ENCODE measurements at regions of chr3 and their contacts with region 1.

Region 1: DNA sequence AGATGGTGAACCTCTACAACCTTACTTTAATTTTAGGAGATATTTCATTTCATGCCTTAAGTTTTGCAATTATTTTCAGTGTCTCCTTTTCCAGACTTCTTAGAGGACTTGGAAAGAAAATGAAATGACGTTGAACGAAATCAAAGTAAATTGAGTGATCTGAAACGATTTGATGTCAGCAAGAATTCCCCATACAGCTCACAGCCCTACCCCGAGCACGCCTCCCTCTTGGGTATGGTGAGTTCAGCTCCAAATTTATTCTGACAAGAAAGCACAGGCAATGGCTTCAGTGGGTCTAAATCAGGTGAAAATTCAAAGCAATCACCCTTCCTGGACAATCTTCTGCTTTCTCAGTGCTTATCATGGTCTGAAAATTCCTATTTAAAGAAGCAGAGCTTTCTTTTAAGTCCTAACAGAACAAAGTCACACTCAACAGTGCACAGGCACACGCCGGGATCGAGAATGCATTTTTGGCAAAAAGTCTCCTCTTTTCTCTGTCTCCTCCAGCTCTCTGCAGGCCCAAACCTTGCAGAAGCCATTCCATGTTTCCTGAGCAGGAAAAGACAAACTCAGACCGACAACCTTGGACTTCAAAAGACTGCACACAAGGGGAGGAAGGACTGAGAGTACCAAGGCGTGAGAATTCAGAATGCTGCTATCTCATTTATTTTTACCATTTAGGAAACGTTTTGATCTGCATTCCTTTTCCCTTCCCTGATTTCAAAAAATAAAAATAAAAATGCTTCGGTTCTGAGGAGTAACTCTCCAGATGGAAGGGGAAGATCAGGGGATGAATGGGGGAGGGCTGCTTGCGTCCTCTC is 72.0 kb downstream of the CCNL1 start:
- DNase-seq: peak; percentile 16
- H3K4me3 ChIP-seq: peak overlapping the region in 3 of 4 donors; percentile 50 to 73 (median 60)
- H3K27ac ChIP-seq: peak overlapping the region; percentile 96 to 100 (median 100)
- H3K4me1 ChIP-seq: peaks cover 30 to 42% (median 35%) of the 10 kb centered on the region in 4 donors
- H3K27me3 ChIP-seq: no peaks in the 10 kb centered on the region
- CTCF ChIP-seq: no peak
- EP300 ChIP-seq: no peak
- POLR2A ChIP-seq: no peak

Region 2: DNA sequence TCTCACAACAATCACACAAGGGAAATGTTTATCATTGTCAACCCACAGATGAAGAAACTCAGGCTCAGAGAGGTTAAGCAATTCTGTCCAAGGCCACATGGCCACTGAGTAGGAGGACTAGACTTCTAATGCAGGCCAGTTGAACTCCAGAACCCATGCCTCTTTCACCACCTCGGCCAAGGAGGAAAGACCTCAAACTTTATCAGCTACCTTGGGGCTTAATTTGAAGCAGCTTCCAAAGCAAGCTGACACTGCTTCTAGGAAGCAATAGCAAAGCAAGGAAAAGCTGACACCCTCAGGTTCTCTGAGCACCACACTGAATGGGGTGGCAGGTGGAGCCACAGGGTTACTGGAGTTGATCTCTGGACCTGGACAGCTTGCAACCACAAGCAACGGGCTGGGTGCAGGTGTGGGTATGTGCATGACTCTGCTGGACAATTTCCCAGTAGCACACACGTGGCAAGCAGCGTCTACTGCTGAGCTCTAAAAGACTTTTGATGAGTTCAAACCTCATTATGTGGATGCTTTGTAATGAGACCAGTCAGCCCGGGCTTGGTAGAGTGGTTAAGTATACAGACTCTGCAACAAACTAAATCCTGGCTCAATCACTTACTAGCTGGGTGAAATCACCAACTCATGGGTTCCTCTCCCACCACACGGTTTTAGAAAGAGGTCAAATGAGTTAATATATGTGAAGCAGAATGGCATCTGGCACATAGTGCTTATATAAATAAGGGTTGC is 48.8 kb after region 1 on chr3:
- in situ Hi-C with region 1: loop called in 2 of 4 experiments (anchors 10 kb)
- intact Hi-C with region 1: loop called (anchors 2 kb)
- DNase-seq: peak; percentile 83
- H3K4me3 ChIP-seq: no peak overlapping the region
- H3K27ac ChIP-seq: peak overlapping the region; percentile 74 to 84 (median 80)
- H3K4me1 ChIP-seq: peaks cover 23 to 46% (median 31%) of the 10 kb centered on the region in 4 donors
- H3K27me3 ChIP-seq: no peaks in the 10 kb centered on the region
- CTCF ChIP-seq: no peak
- EP300 ChIP-seq: no peak
- POLR2A ChIP-seq: no peak

Region 3: GRCh38 chr3:158845765-158846350 is 1757.9 kb after region 1 on chr3:
- in situ Hi-C with region 1: no loop called
- intact Hi-C with region 1: no loop called
- DNase-seq: no peak
- H3K4me3 ChIP-seq: no peak overlapping the region
- H3K27ac ChIP-seq: no peak overlapping the region
- H3K4me1 ChIP-seq: no peaks in the 10 kb centered on the region
- H3K27me3 ChIP-seq: no peaks in the 10 kb centered on the region
- CTCF ChIP-seq: peak; percentile 65 to 74 (median 68)
- EP300 ChIP-seq: no peak
- POLR2A ChIP-seq: no peak

Measured in transverse colon (tissue), 4 donors.